HepG2 (cell line): ENCODE measurements at regions of chr11 and their contacts with region 1.

Region 1: GRCh38 chr11:85854557-85855340 is 434 bp upstream of the CCDC83 start:
- DNase-seq: peak; percentile 84
- ATAC-seq: peak; percentile 100
- H3K4me3 ChIP-seq: peak overlapping the region; percentile 63 to 85 (median 73)
- H3K27ac ChIP-seq: peak overlapping the region; percentile 72
- H3K4me1 ChIP-seq: peaks cover 10% of the 10 kb centered on the region
- H3K27me3 ChIP-seq: no peaks in the 10 kb centered on the region; a peak in 1 of 5 replicates
- CTCF ChIP-seq: peak; percentile 100
- EP300 ChIP-seq: no peak
- POLR2A ChIP-seq: peak; percentile 50 to 75; a peak in 2 of 4 replicates
- RAD21 ChIP-seq: peak; percentile 100

Region 2: GRCh38 chr11:85902353-85902752 is 47.6 kb after region 1 on chr11:
- CTCF ChIA-PET with region 1: no interaction called
- POLR2A ChIA-PET with region 1: no interaction called
- in situ Hi-C with region 1: no loop called
- intact Hi-C with region 1: no loop called
- DNase-seq: no peak
- ATAC-seq: no peak
- H3K4me3 ChIP-seq: no peak overlapping the region
- H3K27ac ChIP-seq: no peak overlapping the region
- H3K4me1 ChIP-seq: peaks cover 6% of the 10 kb centered on the region; the same call in 1 of the 2 replicates
- H3K27me3 ChIP-seq: no peaks in the 10 kb centered on the region
- CTCF ChIP-seq: no peak
- EP300 ChIP-seq: no peak
- POLR2A ChIP-seq: no peak
- RAD21 ChIP-seq: no peak

Region 3: DNA sequence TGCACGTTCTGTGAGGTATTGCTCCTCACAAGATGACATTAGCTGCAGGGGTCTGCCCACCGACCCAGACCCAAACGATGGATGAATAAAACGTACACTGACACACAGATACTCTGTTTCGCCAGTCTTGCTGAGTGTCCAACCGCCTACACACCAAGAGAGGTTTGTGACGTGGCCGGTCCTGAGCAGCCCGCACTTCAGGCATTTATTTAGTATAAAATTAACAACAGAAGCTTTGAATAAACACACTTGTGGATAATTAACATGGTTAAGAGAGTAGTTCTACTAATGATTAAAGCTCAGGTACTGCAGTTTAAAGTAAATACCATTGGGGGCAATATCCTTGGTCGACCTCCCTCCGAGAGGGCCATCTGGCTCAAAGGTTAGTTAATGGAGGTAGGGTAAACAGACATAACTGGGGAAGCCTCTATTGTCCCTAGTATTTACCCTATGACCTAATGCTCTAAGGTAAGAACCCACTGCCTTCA is 76.2 kb after region 1 on chr11:
- CTCF ChIA-PET with region 1: no interaction called
- POLR2A ChIA-PET with region 1: interaction called, 5 read pairs
- in situ Hi-C with region 1: no loop called
- intact Hi-C with region 1: loop called (anchors 2 kb)
- DNase-seq: peak; percentile 94
- ATAC-seq: peak; percentile 94
- H3K4me3 ChIP-seq: peak overlapping the region in 1 of 3 experiments; percentile 17; a peak in 2 of 6 replicates
- H3K27ac ChIP-seq: peak overlapping the region; percentile 81
- H3K4me1 ChIP-seq: peaks cover 58% of the 10 kb centered on the region
- H3K27me3 ChIP-seq: no peaks in the 10 kb centered on the region; a peak in 1 of 5 replicates
- CTCF ChIP-seq: no peak
- EP300 ChIP-seq: peak; percentile 84 to 93; a peak in 3 of 4 replicates
- POLR2A ChIP-seq: 0 out of 4 replicates have a peak, but pooled peaks of 1 of the 2 experiments have one; percentile 42
- RAD21 ChIP-seq: no peak

Region 4: GRCh38 chr11:85967457-85967856 is 112.7 kb after region 1 on chr11:
- CTCF ChIA-PET with region 1: no interaction called
- POLR2A ChIA-PET with region 1: no interaction called
- in situ Hi-C with region 1: no loop called
- intact Hi-C with region 1: no loop called
- DNase-seq: no peak
- ATAC-seq: no peak
- H3K4me3 ChIP-seq: no peak overlapping the region
- H3K27ac ChIP-seq: no peak overlapping the region
- H3K4me1 ChIP-seq: peaks cover 17% of the 10 kb centered on the region
- H3K27me3 ChIP-seq: no peaks in the 10 kb centered on the region
- CTCF ChIP-seq: no peak
- EP300 ChIP-seq: no peak
- POLR2A ChIP-seq: no peak
- RAD21 ChIP-seq: no peak

Region 5: GRCh38 chr11:86035164-86035563 is 180.4 kb after region 1 on chr11:
- CTCF ChIA-PET with region 1: no interaction called
- POLR2A ChIA-PET with region 1: no interaction called
- in situ Hi-C with region 1: no loop called
- intact Hi-C with region 1: loop called (anchors 10 kb)
- DNase-seq: no peak
- ATAC-seq: peak; percentile 47; the same call in 1 of the 3 replicates
- H3K4me3 ChIP-seq: no peak overlapping the region
- H3K27ac ChIP-seq: no peak overlapping the region
- H3K4me1 ChIP-seq: peaks cover 32% of the 10 kb centered on the region
- H3K27me3 ChIP-seq: no peaks in the 10 kb centered on the region
- CTCF ChIP-seq: no peak
- EP300 ChIP-seq: no peak
- POLR2A ChIP-seq: no peak
- RAD21 ChIP-seq: no peak

Region 6: DNA sequence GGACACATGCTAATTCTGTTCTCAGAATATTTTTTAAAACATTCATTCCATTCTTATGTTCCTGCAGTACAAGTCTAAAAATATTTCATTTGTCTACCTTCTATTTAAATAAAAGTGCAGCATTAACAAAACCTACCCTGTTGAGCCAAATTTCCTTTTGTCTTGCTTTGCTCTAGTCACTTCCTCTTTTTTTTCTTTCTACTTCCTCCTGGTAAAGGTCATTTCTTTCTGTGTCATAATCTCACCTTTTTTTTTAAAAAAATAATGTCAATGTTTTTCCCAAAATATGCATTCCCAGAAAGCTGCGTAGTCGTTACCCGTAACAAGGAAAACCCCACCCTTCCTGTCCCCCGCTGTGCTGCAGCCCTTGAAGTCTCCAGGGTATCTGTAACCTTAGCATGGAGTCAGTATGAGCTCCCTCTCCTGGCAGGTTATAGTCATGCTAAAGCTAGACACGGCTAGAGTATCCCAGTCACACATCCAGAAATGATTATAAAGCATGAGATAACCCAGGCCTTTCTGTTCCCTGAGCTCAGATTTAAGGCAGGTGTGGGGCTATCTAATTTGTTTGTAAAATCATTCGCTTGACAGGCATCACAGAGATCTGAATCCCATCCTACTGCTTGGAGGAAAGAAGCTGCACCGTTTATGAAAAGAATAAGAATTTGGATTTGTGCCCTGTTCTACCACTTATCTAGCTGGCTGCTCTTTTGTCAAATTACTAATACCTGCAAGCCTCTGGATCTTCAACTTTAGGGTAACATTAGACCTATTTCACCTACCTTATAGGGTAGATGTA is 338.7 kb after region 1 on chr11:
- CTCF ChIA-PET with region 1: interaction called, 8 read pairs
- POLR2A ChIA-PET with region 1: interaction called, 3 read pairs
- in situ Hi-C with region 1: no loop called
- intact Hi-C with region 1: loop called (anchors 1 kb)
- DNase-seq: peak; percentile 76
- ATAC-seq: peak; percentile 100
- H3K4me3 ChIP-seq: peak overlapping the region in 2 of 3 experiments; percentile 21; a peak in 2 of 6 replicates
- H3K27ac ChIP-seq: no peak overlapping the region
- H3K4me1 ChIP-seq: peaks cover 9% of the 10 kb centered on the region; the same call in 1 of the 2 replicates
- H3K27me3 ChIP-seq: no peaks in the 10 kb centered on the region
- CTCF ChIP-seq: peak; percentile 85
- EP300 ChIP-seq: no peak
- POLR2A ChIP-seq: no peak
- RAD21 ChIP-seq: peak; percentile 65; the same call in 1 of the 2 replicates

Region 7: GRCh38 chr11:86218125-86219084 is 363.7 kb after region 1 on chr11:
- CTCF ChIA-PET with region 1: interaction called, 7 read pairs
- POLR2A ChIA-PET with region 1: interaction called, 3 read pairs
- in situ Hi-C with region 1: no loop called
- intact Hi-C with region 1: loop called (anchors 2 kb)
- DNase-seq: peak; percentile 64
- ATAC-seq: peak; percentile 96
- H3K4me3 ChIP-seq: peak overlapping the region in 2 of 3 experiments; percentile 24 to 31; a peak in 4 of 6 replicates
- H3K27ac ChIP-seq: no peak overlapping the region
- H3K4me1 ChIP-seq: peaks cover 13% of the 10 kb centered on the region
- H3K27me3 ChIP-seq: no peaks in the 10 kb centered on the region; a peak in 2 of 5 replicates
- CTCF ChIP-seq: peak; percentile 83
- EP300 ChIP-seq: no peak
- POLR2A ChIP-seq: no peak
- RAD21 ChIP-seq: peak; percentile 77